ENCODE measurements at regions of chr2 and their contacts with region 1.

Region 1: DNA sequence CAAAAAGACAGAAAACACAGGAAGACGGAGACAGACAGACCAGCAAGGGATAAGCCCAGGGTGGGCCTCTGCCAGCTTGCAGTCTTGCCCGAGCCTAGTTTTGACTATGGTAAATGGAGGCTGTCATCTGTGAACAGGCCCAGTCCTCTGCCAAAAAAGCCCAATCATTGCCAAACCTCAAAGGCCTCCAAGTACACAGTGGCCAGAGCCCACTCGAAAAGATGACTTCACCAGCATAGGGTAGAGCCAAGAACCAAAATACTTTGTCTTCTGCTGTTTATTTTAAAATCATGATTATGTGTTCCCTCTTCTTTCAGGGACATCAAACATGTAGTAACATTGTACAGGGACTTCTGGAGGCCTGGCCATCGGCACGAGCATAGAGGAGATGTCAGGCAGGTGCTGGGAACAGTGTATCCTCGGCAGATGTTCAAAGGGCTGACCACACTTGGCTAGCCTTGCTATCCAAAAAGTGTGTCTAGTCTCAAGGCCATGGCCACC is 66.0 kb downstream of the TTC32 start:
- DNase-seq: no peak
- ATAC-seq: peak; percentile 21 to 49
- H3K4me3 ChIP-seq: no peak overlapping the region
- H3K27ac ChIP-seq: no peak overlapping the region
- H3K4me1 ChIP-seq: no peaks in the 10 kb centered on the region
- H3K27me3 ChIP-seq: no peaks in the 10 kb centered on the region
- CTCF ChIP-seq: no peak

Region 2: DNA sequence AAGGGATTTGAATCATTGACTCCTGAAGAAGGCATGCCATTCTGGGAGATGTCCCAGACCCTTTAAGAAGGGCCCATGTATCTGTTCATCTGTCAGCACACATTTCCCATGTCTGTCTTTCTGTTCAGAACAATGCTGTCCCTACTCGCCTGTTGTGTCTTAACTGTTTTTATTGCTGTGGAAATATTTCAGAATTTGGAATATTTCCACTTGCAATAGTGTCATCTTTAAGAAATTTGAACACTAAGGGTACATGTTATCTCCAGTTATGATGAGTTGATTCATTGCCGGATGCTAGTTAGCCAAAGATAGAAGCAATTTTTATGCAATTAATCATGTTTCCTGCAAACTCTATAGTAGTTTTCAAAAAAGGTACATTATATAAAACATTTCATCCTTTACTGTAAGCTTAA is 1209.6 kb before region 1 on chr2:
- intact Hi-C with region 1: loop called (anchors 10 kb)
- DNase-seq: no peak
- ATAC-seq: no peak
- H3K4me3 ChIP-seq: no peak overlapping the region
- H3K27ac ChIP-seq: no peak overlapping the region
- H3K4me1 ChIP-seq: no peaks in the 10 kb centered on the region
- H3K27me3 ChIP-seq: no peaks in the 10 kb centered on the region
- CTCF ChIP-seq: no peak

Measured in lower lobe of right lung (tissue), 2 donors.